ENCODE measurements at regions of chr20 and their contacts with region 1.

Region 1: GRCh38 chr20:1301031-1301529 is 27.9 kb downstream of the SDCBP2 start:
- DNase-seq: no peak
- H3K4me3 ChIP-seq: no peak overlapping the region
- H3K27ac ChIP-seq: no peak overlapping the region
- H3K4me1 ChIP-seq: no peaks in the 10 kb centered on the region
- H3K27me3 ChIP-seq: no peaks in the 10 kb centered on the region
- CTCF ChIP-seq: no peak
- POLR2A ChIP-seq: no peak

Region 2: GRCh38 chr20:1274485-1275311 is 26.4 kb before region 1 on chr20:
- intact Hi-C with region 1: no loop called
- DNase-seq: no peak
- H3K4me3 ChIP-seq: no peak overlapping the region
- H3K27ac ChIP-seq: no peak overlapping the region
- H3K4me1 ChIP-seq: no peaks in the 10 kb centered on the region
- H3K27me3 ChIP-seq: no peaks in the 10 kb centered on the region
- CTCF ChIP-seq: no peak
- POLR2A ChIP-seq: no peak

Region 3: GRCh38 chr20:1440024-1440423 is 138.9 kb after region 1 on chr20:
- intact Hi-C with region 1: loop called (anchors 10 kb)
- DNase-seq: no peak
- H3K4me3 ChIP-seq: no peak overlapping the region
- H3K27ac ChIP-seq: no peak overlapping the region
- H3K4me1 ChIP-seq: no peaks in the 10 kb centered on the region
- H3K27me3 ChIP-seq: no peaks in the 10 kb centered on the region
- CTCF ChIP-seq: no peak
- POLR2A ChIP-seq: no peak

Region 4: GRCh38 chr20:2837221-2837960 is 1536.3 kb after region 1 on chr20:
- intact Hi-C with region 1: no loop called
- DNase-seq: no peak
- H3K4me3 ChIP-seq: no peak overlapping the region
- H3K27ac ChIP-seq: no peak overlapping the region
- H3K4me1 ChIP-seq: peaks cover 0 to 4% of the 10 kb centered on the region in 2 donors
- H3K27me3 ChIP-seq: no peaks in the 10 kb centered on the region
- CTCF ChIP-seq: no peak
- POLR2A ChIP-seq: no peak